WTC11 (cell line): ENCODE measurements at regions of chr7 and their contacts with region 1.

Region 1: GRCh38 chr7:149297034-149297755 is 35.2 kb downstream of the ZNF783 start:
- DNase-seq: no peak
- ATAC-seq: no peak
- H3K4me3 Mint-ChIP-seq: no peak overlapping the region
- H3K27ac Mint-ChIP-seq: no peak overlapping the region
- H3K4me1 Mint-ChIP-seq: peaks cover 14% of the 10 kb centered on the region
- H3K27me3 Mint-ChIP-seq: peaks cover 5% of the 10 kb centered on the region; the same call in 1 of the 2 replicates
- CTCF ChIP-seq: no peak

Region 2: GRCh38 chr7:149362696-149363095 is 65.5 kb after region 1 on chr7:
- CTCF ChIA-PET with region 1: no interaction called
- POLR2A ChIA-PET with region 1: no interaction called
- DNase-seq: no peak
- ATAC-seq: no peak
- H3K4me3 Mint-ChIP-seq: no peak overlapping the region
- H3K27ac Mint-ChIP-seq: no peak overlapping the region
- H3K4me1 Mint-ChIP-seq: no peaks in the 10 kb centered on the region
- H3K27me3 Mint-ChIP-seq: peaks cover 32% of the 10 kb centered on the region
- CTCF ChIP-seq: no peak

Region 3: GRCh38 chr7:149398195-149398820 is 101.1 kb after region 1 on chr7:
- CTCF ChIA-PET with region 1: no interaction called
- POLR2A ChIA-PET with region 1: no interaction called
- DNase-seq: no peak
- ATAC-seq: peak; percentile 54
- H3K4me3 Mint-ChIP-seq: no peak overlapping the region
- H3K27ac Mint-ChIP-seq: no peak overlapping the region
- H3K4me1 Mint-ChIP-seq: peaks cover 16% of the 10 kb centered on the region
- H3K27me3 Mint-ChIP-seq: no peaks in the 10 kb centered on the region; the same call in 1 of the 2 replicates
- CTCF ChIP-seq: no peak

Region 4: GRCh38 chr7:149547126-149547525 is 249.9 kb after region 1 on chr7:
- CTCF ChIA-PET with region 1: no interaction called
- POLR2A ChIA-PET with region 1: interaction called, 12 read pairs
- DNase-seq: no peak
- ATAC-seq: peak; percentile 62
- H3K4me3 Mint-ChIP-seq: no peak overlapping the region
- H3K27ac Mint-ChIP-seq: no peak overlapping the region
- H3K4me1 Mint-ChIP-seq: no peaks in the 10 kb centered on the region
- H3K27me3 Mint-ChIP-seq: peaks cover 2% of the 10 kb centered on the region; the same call in 1 of the 2 replicates
- CTCF ChIP-seq: no peak